RWPE1 (cell line): ENCODE measurements at regions of chr12 and their contacts with region 1.

Region 1: GRCh38 chr12:117874842-117875434 is 93.9 kb downstream of the KSR2 start:
- DNase-seq: peak; percentile 60
- H3K27ac ChIP-seq: no peak overlapping the region
- CTCF ChIP-seq: peak; percentile 89

Region 2: DNA sequence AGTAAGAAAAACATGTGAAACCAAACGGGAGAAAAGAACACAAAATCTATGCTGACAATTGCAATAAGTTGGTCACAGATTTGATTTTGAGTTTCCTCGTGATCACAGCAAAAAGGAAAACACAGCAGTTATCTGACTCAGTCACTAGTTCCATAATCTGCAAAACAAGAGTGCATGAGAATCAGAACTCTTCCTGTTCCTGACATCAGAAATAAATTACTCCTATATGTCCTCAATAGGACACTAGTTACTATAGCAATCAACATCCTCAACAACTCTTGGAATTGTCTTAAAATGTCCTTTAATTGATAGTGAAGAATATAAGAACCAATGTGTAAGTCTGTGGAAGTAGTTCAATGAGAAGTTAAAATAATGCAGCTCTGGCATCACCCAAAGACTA is 245.5 kb before region 1 on chr12:
- CTCF ChIA-PET with region 1: no interaction called
- POLR2A ChIA-PET with region 1: no interaction called
- DNase-seq: no peak
- H3K27ac ChIP-seq: no peak overlapping the region
- CTCF ChIP-seq: no peak

Region 3: GRCh38 chr12:117921929-117922777 is 47.2 kb after region 1 on chr12:
- CTCF ChIA-PET with region 1: no interaction called
- POLR2A ChIA-PET with region 1: no interaction called
- DNase-seq: no peak
- H3K27ac ChIP-seq: no peak overlapping the region
- CTCF ChIP-seq: no peak

Region 4: GRCh38 chr12:118035246-118036041 is 160.5 kb after region 1 on chr12:
- CTCF ChIA-PET with region 1: interaction called, 11 read pairs
- POLR2A ChIA-PET with region 1: no interaction called
- DNase-seq: no peak
- H3K27ac ChIP-seq: peak overlapping the region; percentile 31; the same call in 1 of the 2 replicates
- CTCF ChIP-seq: no peak

Region 5: GRCh38 chr12:118055865-118056773 is 181.2 kb after region 1 on chr12:
- CTCF ChIA-PET with region 1: interaction called, 12 read pairs
- POLR2A ChIA-PET with region 1: no interaction called
- DNase-seq: no peak
- H3K27ac ChIP-seq: peak overlapping the region; percentile 44
- CTCF ChIP-seq: no peak